BJ (cell line): ENCODE measurements at regions of chr6 and their contacts with region 1.

Region 1: DNA sequence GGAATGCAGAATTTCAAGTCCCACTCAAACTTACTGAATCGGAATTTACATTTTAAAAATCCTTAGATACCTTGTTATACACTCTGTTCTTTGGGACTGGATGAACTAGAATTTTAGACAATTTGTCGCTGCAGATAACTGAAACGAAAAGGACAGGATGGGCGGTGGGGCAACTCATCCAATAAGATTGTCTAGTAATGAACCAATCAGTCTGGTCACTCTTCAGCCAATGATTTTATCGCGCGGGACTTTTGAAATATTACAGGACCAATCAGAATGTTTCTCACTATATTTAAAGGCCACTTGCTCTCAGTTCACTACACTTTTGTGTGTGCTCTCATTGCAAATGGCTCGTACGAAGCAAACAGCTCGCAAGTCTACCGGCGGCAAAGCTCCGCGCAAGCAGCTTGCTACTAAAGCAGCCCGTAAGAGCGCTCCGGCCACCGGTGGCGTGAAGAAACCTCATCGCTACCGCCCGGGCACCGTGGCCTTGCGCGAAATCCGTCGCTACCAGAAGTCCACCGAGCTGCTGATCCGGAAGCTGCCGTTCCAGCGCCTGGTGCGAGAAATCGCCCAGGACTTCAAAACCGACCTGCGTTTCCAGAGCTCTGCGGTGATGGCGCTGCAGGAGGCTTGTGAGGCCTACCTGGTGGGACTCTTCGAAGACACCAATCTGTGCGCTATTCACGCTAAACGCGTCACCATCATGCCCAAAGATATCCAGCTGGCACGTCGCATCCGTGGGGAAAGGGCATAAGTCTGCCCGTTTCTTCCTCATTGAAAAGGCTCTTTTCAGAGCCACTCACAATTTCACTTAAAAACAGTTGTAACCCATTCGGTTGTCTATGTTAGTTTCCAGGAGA is 41.9 kb upstream of the HFE start:
- DNase-seq: peak; percentile 87
- H3K4me3 ChIP-seq: peak overlapping the region; percentile 51
- H3K27me3 ChIP-seq: no peaks in the 10 kb centered on the region
- CTCF ChIP-seq: peak; percentile 30; the same call in 1 of the 2 replicates

Region 2: GRCh38 chr6:25899123-25899522 is 146.2 kb before region 1 on chr6:
- CTCF ChIA-PET with region 1: no interaction called
- POLR2A ChIA-PET with region 1: no interaction called
- DNase-seq: no peak
- H3K4me3 ChIP-seq: no peak overlapping the region
- H3K27me3 ChIP-seq: no peaks in the 10 kb centered on the region
- CTCF ChIP-seq: no peak

Region 3: DNA sequence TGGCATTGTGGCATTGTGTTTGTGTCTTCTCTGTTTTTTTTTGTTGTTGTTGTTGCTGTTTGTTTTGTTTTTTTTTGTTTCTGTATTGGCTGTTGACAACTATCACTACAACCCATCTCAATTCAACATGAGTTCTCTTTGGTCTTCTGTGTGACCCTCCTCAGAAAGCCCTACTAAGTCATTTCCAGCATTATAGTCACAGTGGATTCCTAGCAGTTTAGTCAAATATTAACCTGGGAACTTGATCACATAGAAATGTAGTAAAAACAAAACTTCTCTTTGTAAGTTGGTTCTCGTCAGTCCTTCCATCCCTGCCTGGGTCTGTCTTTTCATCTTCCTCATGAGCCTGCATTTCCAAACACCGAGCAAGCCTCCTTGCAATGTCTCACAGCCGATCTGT is 131.6 kb before region 1 on chr6:
- CTCF ChIA-PET with region 1: no interaction called
- POLR2A ChIA-PET with region 1: no interaction called
- DNase-seq: no peak
- H3K4me3 ChIP-seq: no peak overlapping the region
- H3K27me3 ChIP-seq: no peaks in the 10 kb centered on the region; the same call in 1 of the 2 replicates
- CTCF ChIP-seq: no peak

Region 4: GRCh38 chr6:25992413-25993037 is 52.8 kb before region 1 on chr6:
- CTCF ChIA-PET with region 1: no interaction called
- POLR2A ChIA-PET with region 1: no interaction called
- DNase-seq: peak; percentile 52
- H3K4me3 ChIP-seq: peak overlapping the region; percentile 57
- H3K27me3 ChIP-seq: no peaks in the 10 kb centered on the region
- CTCF ChIP-seq: peak; percentile 93

Region 5: GRCh38 chr6:26025894-26026832 is 19.1 kb before region 1 on chr6:
- CTCF ChIA-PET with region 1: interaction called, 13 read pairs
- POLR2A ChIA-PET with region 1: interaction called, 26 read pairs
- DNase-seq: peak; percentile 78
- H3K4me3 ChIP-seq: peak overlapping the region; percentile 64
- H3K27me3 ChIP-seq: no peaks in the 10 kb centered on the region
- CTCF ChIP-seq: peak; percentile 95

Region 6: DNA sequence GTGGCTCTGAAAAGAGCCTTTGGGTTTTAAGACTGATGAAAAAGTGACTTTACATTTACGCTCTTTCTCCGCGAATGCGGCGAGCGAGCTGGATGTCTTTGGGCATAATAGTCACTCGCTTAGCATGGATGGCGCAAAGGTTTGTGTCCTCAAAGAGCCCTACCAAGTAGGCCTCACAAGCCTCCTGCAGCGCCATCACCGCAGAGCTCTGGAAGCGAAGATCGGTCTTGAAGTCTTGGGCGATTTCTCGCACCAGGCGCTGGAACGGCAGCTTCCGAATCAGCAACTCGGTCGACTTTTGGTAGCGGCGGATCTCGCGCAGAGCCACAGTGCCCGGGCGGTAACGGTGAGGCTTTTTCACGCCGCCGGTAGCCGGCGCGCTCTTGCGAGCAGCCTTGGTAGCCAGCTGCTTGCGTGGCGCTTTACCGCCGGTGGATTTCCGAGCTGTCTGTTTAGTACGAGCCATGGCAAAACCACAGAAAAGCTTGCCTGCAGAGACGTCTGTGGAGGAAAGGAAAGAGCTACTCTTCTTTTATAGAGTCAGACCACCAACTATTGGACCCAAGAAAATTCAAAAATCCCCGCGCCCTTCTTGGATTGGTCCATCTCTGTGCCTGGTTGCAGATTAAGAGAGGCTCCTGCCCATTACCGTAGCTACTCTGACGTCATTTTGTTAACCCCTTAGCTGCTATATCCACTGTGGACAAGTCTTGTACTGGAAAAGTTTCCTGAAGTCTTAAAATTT is 13.5 kb before region 1 on chr6:
- CTCF ChIA-PET with region 1: interaction called, 13 read pairs
- POLR2A ChIA-PET with region 1: interaction called, 26 read pairs
- DNase-seq: peak; percentile 80
- H3K4me3 ChIP-seq: peak overlapping the region; percentile 45
- H3K27me3 ChIP-seq: no peaks in the 10 kb centered on the region
- CTCF ChIP-seq: peak; percentile 39; the same call in 1 of the 2 replicates

Region 7: DNA sequence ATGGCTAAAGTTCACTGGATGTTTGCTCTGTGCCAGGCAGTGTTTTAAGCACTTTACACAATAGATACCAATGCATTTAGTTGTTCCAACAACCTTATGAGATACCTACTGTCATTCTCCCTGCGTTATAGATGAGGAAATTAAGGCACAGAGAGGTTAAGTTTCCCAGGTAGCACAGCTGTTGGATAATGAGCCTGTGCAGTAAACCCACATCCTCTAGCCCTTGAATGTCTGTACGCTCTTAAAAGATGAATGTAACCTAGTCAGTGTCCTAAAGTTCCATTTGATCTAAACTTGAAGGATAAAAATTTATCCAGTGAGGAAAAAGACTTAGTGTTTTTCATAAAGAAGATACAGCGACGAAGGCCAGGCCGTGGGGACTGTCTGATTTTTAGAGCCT is 69.9 kb after region 1 on chr6:
- CTCF ChIA-PET with region 1: no interaction called
- POLR2A ChIA-PET with region 1: no interaction called
- DNase-seq: no peak
- H3K4me3 ChIP-seq: no peak overlapping the region
- H3K27me3 ChIP-seq: no peaks in the 10 kb centered on the region
- CTCF ChIP-seq: no peak

Region 8: GRCh38 chr6:26196846-26197648 is 151.8 kb after region 1 on chr6:
- CTCF ChIA-PET with region 1: no interaction called
- POLR2A ChIA-PET with region 1: interaction called, 13 read pairs
- DNase-seq: peak; percentile 83
- H3K4me3 ChIP-seq: peak overlapping the region; percentile 82
- H3K27me3 ChIP-seq: no peaks in the 10 kb centered on the region
- CTCF ChIP-seq: 0 out of 2 replicates have a peak, but pooled peaks have one; percentile 13